ENCODE measurements at regions of chr2 and their contacts with region 1.

Region 1: GRCh38 chr2:200993097-200993496 is 29.6 kb upstream of the ORC2 start:
- DNase-seq: no peak
- ATAC-seq: no peak
- H3K4me3 ChIP-seq: no peak overlapping the region
- H3K27ac ChIP-seq: no peak overlapping the region
- H3K4me1 ChIP-seq: peaks cover 0 to 6% (median 0%) of the 10 kb centered on the region in 9 donors
- H3K27me3 ChIP-seq: no peaks in the 10 kb centered on the region
- CTCF ChIP-seq: no peak

Region 2: GRCh38 chr2:200944467-200945394 is 48.4 kb before region 1 on chr2:
- intact Hi-C with region 1: loop called in 1 of 10 experiments (anchors 10 kb)
- DNase-seq: no peak
- ATAC-seq: no peak
- H3K4me3 ChIP-seq: no peak overlapping the region
- H3K27ac ChIP-seq: no peak overlapping the region
- H3K4me1 ChIP-seq: peaks cover 0 to 2% (median 0%) of the 10 kb centered on the region in 9 donors
- H3K27me3 ChIP-seq: no peaks in the 10 kb centered on the region
- CTCF ChIP-seq: no peak

Region 3: GRCh38 chr2:201040867-201041628 is 48.0 kb after region 1 on chr2:
- intact Hi-C with region 1: no loop called
- DNase-seq: no peak
- ATAC-seq: no peak
- H3K4me3 ChIP-seq: no peak overlapping the region
- H3K27ac ChIP-seq: no peak overlapping the region
- H3K4me1 ChIP-seq: peaks cover 0 to 19% (median 0%) of the 10 kb centered on the region in 9 donors
- H3K27me3 ChIP-seq: no peaks in the 10 kb centered on the region
- CTCF ChIP-seq: no peak

Measured in heart right ventricle (tissue), 16 donors.